Dorsolateral prefrontal cortex (tissue), 120 donors: ENCODE measurements at regions of chr1 and their contacts with region 1.

Region 1: GRCh38 chr1:63073309-63074306 is 248.8 kb upstream of the FOXD3 start:
- DNase-seq: peak in 8 of 10 donors; percentile 3 to 58 (median 34)
- H3K4me3 ChIP-seq: peak overlapping the region; percentile 29 to 71 (median 52)
- H3K27ac ChIP-seq: peak overlapping the region in 3 of 59 donors; percentile 7 to 33 (median 33)
- H3K27me3 ChIP-seq: peaks cover 0 to 27% (median 7%) of the 10 kb centered on the region in 45 donors
- CTCF ChIP-seq: peak in 52 of 56 donors; percentile 15 to 68 (median 47)

Region 2: GRCh38 chr1:62841587-62842169 is 231.9 kb before region 1 on chr1:
- intact Hi-C with region 1: loop called in 1 of 2 experiments (anchors 10 kb)
- DNase-seq: peak in 1 of 10 donors; percentile 27
- H3K4me3 ChIP-seq: no peak overlapping the region
- H3K27ac ChIP-seq: peak overlapping the region in 17 of 59 donors; percentile 3 to 51 (median 28)
- H3K27me3 ChIP-seq: no peaks in the 10 kb centered on the region
- CTCF ChIP-seq: peak; percentile 67 to 96 (median 86)

Region 3: DNA sequence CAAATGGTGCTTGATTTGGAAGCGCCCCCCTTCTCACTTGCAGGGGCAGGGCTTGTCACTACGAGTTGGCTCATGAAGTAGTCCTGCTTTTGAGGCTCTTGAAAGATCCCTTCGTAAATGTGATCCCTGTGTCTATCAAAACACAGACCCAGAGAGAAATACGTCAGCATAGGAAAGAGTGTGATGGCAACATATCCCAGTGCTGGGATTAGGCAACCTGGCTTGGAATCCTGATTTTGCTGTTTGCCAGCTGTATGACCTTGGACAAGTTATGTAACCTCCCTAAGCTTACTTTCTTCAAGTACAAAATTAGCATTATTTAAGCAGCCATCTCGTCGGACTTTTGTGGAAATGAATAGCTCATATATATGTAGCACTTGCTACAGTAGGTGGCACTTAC is 61.3 kb before region 1 on chr1:
- intact Hi-C with region 1: no loop called
- DNase-seq: no peak
- H3K4me3 ChIP-seq: no peak overlapping the region
- H3K27ac ChIP-seq: no peak overlapping the region
- H3K27me3 ChIP-seq: peaks cover 0 to 3% (median 0%) of the 10 kb centered on the region in 45 donors
- CTCF ChIP-seq: no peak

Region 4: GRCh38 chr1:63124666-63125191 is 51.1 kb after region 1 on chr1:
- intact Hi-C with region 1: loop called in 1 of 2 experiments (anchors 5 kb)
- DNase-seq: no peak
- H3K4me3 ChIP-seq: peak overlapping the region in 19 of 59 donors; percentile 2 to 49 (median 7)
- H3K27ac ChIP-seq: peak overlapping the region in 55 of 59 donors; percentile 18 to 87 (median 72)
- H3K27me3 ChIP-seq: peaks cover 0 to 2% (median 0%) of the 10 kb centered on the region in 45 donors
- CTCF ChIP-seq: peak in 7 of 56 donors; percentile 5 to 38 (median 17)

Region 5: GRCh38 chr1:63148825-63149645 is 75.4 kb after region 1 on chr1:
- intact Hi-C with region 1: loop called in 1 of 2 experiments (anchors 5 kb)
- DNase-seq: peak in 6 of 10 donors; percentile 21 to 77 (median 52)
- H3K4me3 ChIP-seq: no peak overlapping the region
- H3K27ac ChIP-seq: no peak overlapping the region
- H3K27me3 ChIP-seq: peaks cover 0 to 18% (median 0%) of the 10 kb centered on the region in 45 donors
- CTCF ChIP-seq: peak; percentile 22 to 84 (median 66)